MCF 10A (cell line): ENCODE measurements at regions of chr4 and their contacts with region 1.

Region 1: GRCh38 chr4:63717384-63717783 is 691.9 kb downstream of the TECRL start:
- DNase-seq: peak; percentile 48
- H3K4me3 Mint-ChIP-seq: no peak overlapping the region
- H3K27ac Mint-ChIP-seq: no peak overlapping the region
- H3K4me1 Mint-ChIP-seq: no peaks in the 10 kb centered on the region
- H3K27me3 Mint-ChIP-seq: no peaks in the 10 kb centered on the region
- CTCF ChIP-seq: peak; percentile 26

Region 2: DNA sequence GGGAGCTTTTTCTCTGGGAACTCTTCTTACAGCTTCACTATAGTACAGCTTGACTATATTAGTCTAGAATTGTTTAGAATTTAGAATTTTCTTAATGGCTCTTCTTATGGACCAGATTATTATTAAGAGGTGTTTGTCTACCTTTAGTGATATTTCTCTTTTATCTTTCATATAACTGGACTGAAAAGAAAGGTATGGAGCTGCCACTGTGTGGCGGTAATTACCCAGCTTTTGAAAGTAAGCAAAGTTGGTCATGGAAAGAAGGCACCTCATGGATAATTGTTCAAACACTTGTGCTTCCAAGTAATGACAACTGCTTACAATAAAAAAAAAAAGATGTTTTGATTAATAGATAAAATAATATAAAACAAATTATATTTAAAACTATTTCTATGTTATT is 420.6 kb before region 1 on chr4:
- CTCF ChIA-PET with region 1: interaction called, 4 read pairs
- POLR2A ChIA-PET with region 1: no interaction called
- intact Hi-C with region 1: loop called (anchors 2 kb)
- DNase-seq: peak; percentile 38
- H3K4me3 Mint-ChIP-seq: no peak overlapping the region
- H3K27ac Mint-ChIP-seq: no peak overlapping the region
- H3K4me1 Mint-ChIP-seq: no peaks in the 10 kb centered on the region
- H3K27me3 Mint-ChIP-seq: no peaks in the 10 kb centered on the region
- CTCF ChIP-seq: peak; percentile 31

Region 3: DNA sequence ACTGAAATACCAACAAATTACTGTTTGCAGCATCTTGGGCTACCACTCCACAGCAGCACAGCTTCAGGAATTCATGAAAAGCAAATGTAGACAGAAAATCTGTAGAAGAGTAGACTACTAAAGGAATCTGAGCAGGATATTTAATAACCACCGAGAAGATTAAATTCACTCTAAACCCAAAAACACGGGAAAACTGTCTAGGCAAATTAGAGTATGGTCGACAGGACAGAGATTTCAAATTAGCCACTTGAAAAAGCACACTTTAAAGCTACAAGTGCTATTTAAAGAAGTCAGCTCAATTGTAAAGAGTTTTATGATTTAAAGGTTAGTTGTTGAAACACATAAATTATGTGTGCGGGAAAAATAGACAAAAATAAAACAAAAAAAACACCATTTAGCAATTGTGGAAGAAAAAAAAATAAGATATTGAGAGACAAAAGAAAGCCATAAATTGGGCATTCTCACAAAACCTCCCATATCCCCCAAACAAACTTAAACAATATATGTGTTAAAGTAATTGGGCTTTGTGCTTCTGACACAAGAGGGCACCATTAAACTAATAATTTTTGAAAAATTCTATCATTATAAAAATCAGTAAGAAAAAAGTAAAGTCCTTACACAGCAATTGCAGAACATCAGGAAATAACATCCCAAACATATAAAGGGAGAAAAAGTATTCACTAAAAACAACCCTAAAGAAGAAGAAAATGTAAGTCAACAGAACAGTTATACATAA is 189.0 kb before region 1 on chr4:
- CTCF ChIA-PET with region 1: interaction called, 5 read pairs
- POLR2A ChIA-PET with region 1: no interaction called
- intact Hi-C with region 1: loop called (anchors 2 kb)
- DNase-seq: peak; percentile 20
- H3K4me3 Mint-ChIP-seq: no peak overlapping the region
- H3K27ac Mint-ChIP-seq: no peak overlapping the region
- H3K4me1 Mint-ChIP-seq: no peaks in the 10 kb centered on the region
- H3K27me3 Mint-ChIP-seq: no peaks in the 10 kb centered on the region
- CTCF ChIP-seq: peak; percentile 44